ENCODE measurements at regions of chr14 and their contacts with region 1.

Region 1: DNA sequence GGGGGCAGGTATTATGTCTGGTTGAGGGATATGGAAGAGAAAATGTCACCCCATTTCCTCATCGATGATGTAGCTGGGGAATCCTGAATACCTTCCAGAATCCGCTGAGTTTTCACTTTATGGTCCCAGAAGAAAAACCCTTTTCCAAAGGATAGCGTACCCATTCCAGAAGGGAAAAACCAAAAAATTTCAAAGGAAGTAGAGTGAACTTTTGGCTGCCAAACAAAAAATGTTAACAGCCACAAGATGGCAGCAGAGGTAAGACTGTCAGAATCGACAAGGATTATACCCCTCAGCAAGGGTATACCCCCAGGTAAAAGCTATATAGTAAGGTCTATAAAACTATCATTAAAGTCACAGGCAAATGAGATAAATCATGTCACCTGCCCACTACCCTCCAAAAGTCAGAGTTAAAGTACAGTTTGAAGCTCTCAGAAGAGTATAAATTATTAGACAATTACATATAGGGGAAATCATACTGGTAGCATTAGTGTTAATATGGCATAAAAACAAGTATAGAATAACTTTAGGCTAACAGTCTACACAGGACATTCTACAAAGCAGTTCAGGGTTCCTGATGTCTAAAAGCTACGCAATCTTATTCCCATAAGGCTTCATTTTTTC is 18.0 kb downstream of the ACIN1 start:
- DNase-seq: no peak
- ATAC-seq: no peak

Region 2: GRCh38 chr14:23095196-23096108 is 18.6 kb after region 1 on chr14 and contains the start of gene C14orf119:
- intact Hi-C with region 1: loop called (anchors 2 kb)
- DNase-seq: no peak
- ATAC-seq: peak; percentile 96
- total RNA-seq, gene C14orf119: 22.4 TPM